ENCODE measurements at regions of chr2 and their contacts with region 1.

Region 1: GRCh38 chr2:26745609-26746327 is 18.3 kb upstream of the SLC35F6 start:
- DNase-seq: peak; percentile 87 to 92
- H3K4me3 ChIP-seq: no peak overlapping the region
- H3K27ac ChIP-seq: no peak overlapping the region
- H3K4me1 ChIP-seq: peaks cover 0 to 6% of the 10 kb centered on the region in 2 donors
- H3K27me3 ChIP-seq: no peaks in the 10 kb centered on the region
- CTCF ChIP-seq: peak; percentile 68 to 94 (median 91)
- POLR2A ChIP-seq: no peak

Region 2: GRCh38 chr2:26605195-26605998 is 140.4 kb before region 1 on chr2:
- intact Hi-C with region 1: loop called (anchors 2 kb)
- DNase-seq: peak; percentile 45 to 51
- H3K4me3 ChIP-seq: no peak overlapping the region
- H3K27ac ChIP-seq: no peak overlapping the region
- H3K4me1 ChIP-seq: peaks cover 15 to 33% of the 10 kb centered on the region in 2 donors
- H3K27me3 ChIP-seq: no peaks in the 10 kb centered on the region
- CTCF ChIP-seq: peak; percentile 67 to 98 (median 88)
- POLR2A ChIP-seq: no peak

Region 3: GRCh38 chr2:26630669-26631360 is 115.0 kb before region 1 on chr2:
- intact Hi-C with region 1: no loop called
- DNase-seq: peak; percentile 34 to 41
- H3K4me3 ChIP-seq: no peak overlapping the region
- H3K27ac ChIP-seq: peak overlapping the region; percentile 90 to 93 (median 91)
- H3K4me1 ChIP-seq: peaks cover 19 to 48% of the 10 kb centered on the region in 2 donors
- H3K27me3 ChIP-seq: no peaks in the 10 kb centered on the region
- CTCF ChIP-seq: no peak
- POLR2A ChIP-seq: no peak